Heart right ventricle (tissue), 16 donors: ENCODE measurements at regions of chr12 and their contacts with region 1.

Region 1: GRCh38 chr12:57124259-57124877 is 3.9 kb upstream of the LRP1 start:
- DNase-seq: peak in 1 of 2 donors; percentile 84
- ATAC-seq: peak in 2 of 8 donors; percentile 19 to 32
- H3K4me3 ChIP-seq: no peak overlapping the region
- H3K27ac ChIP-seq: no peak overlapping the region
- H3K4me1 ChIP-seq: peaks cover 0 to 22% (median 8%) of the 10 kb centered on the region in 9 donors
- H3K27me3 ChIP-seq: peaks cover 0 to 15% (median 0%) of the 10 kb centered on the region in 7 donors
- CTCF ChIP-seq: peak; percentile 92 to 99 (median 97)

Region 2: DNA sequence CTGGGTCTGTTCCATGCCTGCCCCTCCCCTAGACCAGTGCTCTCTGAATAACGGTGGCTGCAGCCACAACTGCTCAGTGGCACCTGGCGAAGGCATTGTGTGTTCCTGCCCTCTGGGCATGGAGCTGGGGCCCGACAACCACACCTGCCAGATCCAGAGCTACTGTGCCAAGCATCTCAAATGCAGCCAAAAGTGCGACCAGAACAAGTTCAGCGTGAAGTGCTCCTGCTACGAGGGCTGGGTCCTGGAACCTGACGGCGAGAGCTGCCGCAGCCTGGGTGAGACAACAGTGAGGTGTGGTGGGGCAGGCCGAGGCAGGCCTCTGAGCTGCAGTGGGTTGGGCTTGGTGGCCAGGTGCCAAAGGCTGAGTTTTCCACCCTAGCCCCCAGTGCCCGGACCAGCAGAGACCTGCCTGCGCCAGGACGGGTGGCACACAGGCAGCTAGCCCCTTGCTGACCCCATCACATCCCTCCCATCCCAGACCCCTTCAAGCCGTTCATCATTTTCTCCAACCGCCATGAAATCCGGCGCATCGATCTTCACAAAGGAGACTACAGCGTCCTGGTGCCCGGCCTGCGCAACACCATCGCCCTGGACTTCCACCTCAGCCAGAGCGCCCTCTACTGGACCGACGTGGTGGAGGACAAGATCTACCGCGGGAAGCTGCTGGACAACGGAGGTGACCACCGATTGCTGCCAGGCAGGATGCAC is 51.2 kb after region 1 on chr12:
- intact Hi-C with region 1: loop called in 7 of 10 experiments (anchors 2 to 5 kb)
- DNase-seq: peak; percentile 73 to 86
- ATAC-seq: peak; percentile 35 to 73 (median 58)
- H3K4me3 ChIP-seq: no peak overlapping the region
- H3K27ac ChIP-seq: peak overlapping the region in 4 of 10 donors; percentile 26 to 52 (median 32)
- H3K4me1 ChIP-seq: peaks cover 0 to 19% (median 7%) of the 10 kb centered on the region in 9 donors
- H3K27me3 ChIP-seq: no peaks in the 10 kb centered on the region
- CTCF ChIP-seq: peak; percentile 50 to 81 (median 73)

Region 3: GRCh38 chr12:57182921-57183790 is 58.8 kb after region 1 on chr12:
- intact Hi-C with region 1: loop called in 9 of 10 experiments (anchors 1 to 2 kb)
- DNase-seq: peak; percentile 64 to 75
- ATAC-seq: peak; percentile 61 to 84 (median 78)
- H3K4me3 ChIP-seq: no peak overlapping the region
- H3K27ac ChIP-seq: no peak overlapping the region
- H3K4me1 ChIP-seq: peaks cover 0 to 4% (median 0%) of the 10 kb centered on the region in 9 donors
- H3K27me3 ChIP-seq: no peaks in the 10 kb centered on the region
- CTCF ChIP-seq: peak; percentile 61 to 94 (median 87)

Region 4: GRCh38 chr12:57238854-57239554 is 114.6 kb after region 1 on chr12:
- intact Hi-C with region 1: loop called in 1 of 10 experiments (anchors 5 kb)
- DNase-seq: peak; percentile 87 to 92
- ATAC-seq: peak; percentile 60 to 77 (median 72)
- H3K4me3 ChIP-seq: peak overlapping the region; percentile 23 to 61 (median 54)
- H3K27ac ChIP-seq: peak overlapping the region in 9 of 10 donors; percentile 48 to 85 (median 64)
- H3K4me1 ChIP-seq: peaks cover 40 to 97% (median 77%) of the 10 kb centered on the region in 9 donors
- H3K27me3 ChIP-seq: peaks cover 5 to 91% (median 57%) of the 10 kb centered on the region in 7 donors
- CTCF ChIP-seq: peak; percentile 100